Prostate gland (tissue), 2 donors: ENCODE measurements at regions of chr6 and their contacts with region 1.

Region 1: GRCh38 chr6:43263314-43264178 is 20.3 kb downstream of the TTBK1 start:
- DNase-seq: peak; percentile 57
- H3K4me3 ChIP-seq: no peak overlapping the region
- H3K27ac ChIP-seq: no peak overlapping the region
- H3K4me1 ChIP-seq: no peaks in the 10 kb centered on the region
- H3K27me3 ChIP-seq: no peaks in the 10 kb centered on the region
- CTCF ChIP-seq: peak in 3 of 4 experiments; percentile 55 to 82 (median 73)
- POLR2A ChIP-seq: no peak

Region 2: DNA sequence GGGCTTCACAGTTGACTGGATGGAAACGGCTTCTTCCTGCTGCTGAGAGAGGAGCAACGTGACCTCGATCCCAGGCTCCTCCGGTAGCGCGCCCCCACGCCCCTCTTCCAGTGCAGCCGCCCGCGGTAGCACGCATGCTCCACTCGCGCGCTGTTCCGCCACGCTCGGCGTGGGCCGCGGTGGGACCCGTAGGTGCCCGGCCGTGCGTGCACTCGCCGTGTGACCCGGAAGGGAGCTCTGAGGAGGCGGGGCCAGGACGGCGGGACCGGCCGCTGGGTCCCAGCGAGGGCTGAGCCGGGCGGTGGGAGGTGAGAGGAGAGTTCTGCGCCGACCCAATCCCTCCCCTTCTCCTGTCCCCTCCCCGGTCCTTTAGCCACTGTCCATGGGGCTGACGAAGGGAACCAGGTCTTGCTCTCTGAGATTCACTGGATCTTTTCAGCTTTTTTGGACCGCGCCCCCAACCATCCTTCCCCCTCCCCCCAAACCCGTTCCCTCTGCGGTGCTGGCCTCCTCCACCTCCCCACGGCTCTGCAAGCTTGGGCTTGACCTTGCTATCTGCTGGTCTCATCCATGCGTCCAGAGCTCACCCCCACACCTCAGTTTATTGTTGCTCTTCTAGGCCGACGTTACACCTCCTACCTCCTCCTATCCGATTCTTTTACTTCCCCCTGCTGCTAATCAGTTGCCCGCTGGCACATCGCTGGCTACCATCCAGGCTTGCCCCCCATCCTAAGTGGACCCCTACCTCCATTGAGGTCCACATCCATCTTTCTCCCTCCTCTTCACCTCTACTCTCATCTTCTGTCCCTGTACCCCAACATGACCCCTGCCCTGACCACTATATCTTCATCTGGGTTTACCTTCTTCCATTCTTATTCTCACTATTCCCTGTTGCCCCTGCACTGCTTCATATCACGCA is 81.3 kb before region 1 on chr6 and contains the start of gene CUL9:
- intact Hi-C with region 1: no loop called
- DNase-seq: peak; percentile 76
- H3K4me3 ChIP-seq: peak within 1 kb of the TSS; percentile 54 to 61
- H3K27ac ChIP-seq: peak within 1 kb of the TSS; percentile 69 to 70
- H3K4me1 ChIP-seq: peaks cover 9% of the 10 kb centered on the region
- H3K27me3 ChIP-seq: no peaks in the 10 kb centered on the region
- CTCF ChIP-seq: peak in 2 of 4 experiments; percentile 19 to 20
- POLR2A ChIP-seq: peak; percentile 45
- total RNA-seq, gene CUL9: 22.9 to 87.0 TPM

Region 3: GRCh38 chr6:43334466-43335095 is 71.0 kb after region 1 on chr6:
- intact Hi-C with region 1: loop called (anchors 2 kb)
- DNase-seq: no peak
- H3K4me3 ChIP-seq: no peak overlapping the region
- H3K27ac ChIP-seq: no peak overlapping the region
- H3K4me1 ChIP-seq: no peaks in the 10 kb centered on the region
- H3K27me3 ChIP-seq: no peaks in the 10 kb centered on the region
- CTCF ChIP-seq: peak in 3 of 4 experiments; percentile 16 to 55 (median 51)
- POLR2A ChIP-seq: no peak

Region 4: DNA sequence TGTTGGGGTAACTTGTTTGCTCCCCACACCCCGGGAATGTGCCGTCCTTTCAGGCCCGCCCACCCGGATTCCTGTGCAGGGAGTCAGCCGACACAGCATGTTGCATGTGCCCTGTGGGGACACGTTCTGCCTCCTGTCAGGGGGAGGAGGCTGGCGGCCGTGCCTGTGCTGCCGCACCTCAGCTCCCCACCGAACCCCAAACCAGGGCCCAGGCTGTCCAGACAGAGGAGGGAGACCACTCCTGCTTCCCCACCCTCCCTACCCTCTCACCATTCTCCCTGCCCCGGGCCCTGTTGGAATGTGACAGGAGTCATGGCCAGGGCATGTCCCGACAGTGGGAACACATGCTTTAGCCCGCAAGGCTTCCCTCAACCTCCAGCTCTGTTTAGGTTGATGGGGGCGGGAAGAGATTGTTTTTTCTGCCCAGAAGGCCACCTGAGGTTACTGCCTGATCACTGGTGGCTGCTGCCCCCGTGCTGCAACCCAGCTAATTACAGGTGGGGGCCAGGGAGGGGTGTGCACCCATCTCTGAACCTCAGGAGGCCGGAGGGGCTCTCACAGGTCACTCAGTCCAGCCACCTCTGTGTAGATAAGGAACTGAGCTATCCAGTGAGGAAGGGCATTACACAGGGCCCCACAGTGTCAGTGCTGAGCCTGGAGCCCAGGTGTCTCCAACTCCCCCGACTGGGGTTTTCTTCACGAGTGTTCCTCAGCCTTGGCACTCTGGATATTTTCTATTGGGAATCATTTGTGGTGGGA is 233.0 kb after region 1 on chr6:
- intact Hi-C with region 1: loop called (anchors 10 kb)
- DNase-seq: peak; percentile 82
- H3K4me3 ChIP-seq: no peak overlapping the region
- H3K27ac ChIP-seq: peak overlapping the region; percentile 58 to 72
- H3K4me1 ChIP-seq: peaks cover 34% of the 10 kb centered on the region
- H3K27me3 ChIP-seq: no peaks in the 10 kb centered on the region
- CTCF ChIP-seq: peak; percentile 22 to 91 (median 66)
- POLR2A ChIP-seq: no peak